ENCODE measurements at regions of chr2 and their contacts with region 1.

Region 1: GRCh38 chr2:38508311-38509039 is 94.3 kb downstream of the HNRNPLL start:
- DNase-seq: peak; percentile 89 to 94
- ATAC-seq: peak; percentile 93

Region 2: GRCh38 chr2:38030635-38031355 is 477.7 kb before region 1 on chr2:
- intact Hi-C with region 1: no loop called
- DNase-seq: no peak
- ATAC-seq: no peak

Region 3: DNA sequence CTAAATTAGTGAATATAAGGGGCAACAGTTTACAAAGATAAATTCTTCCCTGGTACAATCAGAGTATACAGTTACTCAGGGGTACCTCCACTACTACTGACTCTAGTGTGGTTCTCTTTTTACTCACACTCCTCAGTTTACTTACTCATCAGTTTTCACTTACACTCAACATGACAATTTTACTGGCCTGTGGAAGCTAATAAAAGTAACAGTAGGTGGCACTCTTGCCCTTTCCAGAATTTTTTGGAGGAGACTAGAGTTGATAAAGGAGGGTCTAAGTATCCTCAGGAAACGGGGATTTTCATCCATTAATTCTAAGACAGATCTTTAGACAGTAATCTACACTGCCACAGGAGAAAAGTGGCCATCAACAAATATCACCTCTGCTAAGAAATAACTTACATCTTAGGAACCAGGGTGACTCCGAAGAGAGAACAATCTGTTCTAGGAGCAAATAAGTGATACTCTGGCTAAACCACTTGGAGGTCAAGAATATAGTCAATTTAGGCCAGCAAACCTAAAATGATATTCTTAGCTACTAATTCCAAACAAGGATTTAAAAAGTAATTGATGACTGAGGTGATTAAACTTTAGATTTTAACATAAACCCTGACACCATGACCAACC is 192.7 kb before region 1 on chr2:
- intact Hi-C with region 1: loop called (anchors 5 kb)
- DNase-seq: no peak
- ATAC-seq: peak; percentile 64

Region 4: DNA sequence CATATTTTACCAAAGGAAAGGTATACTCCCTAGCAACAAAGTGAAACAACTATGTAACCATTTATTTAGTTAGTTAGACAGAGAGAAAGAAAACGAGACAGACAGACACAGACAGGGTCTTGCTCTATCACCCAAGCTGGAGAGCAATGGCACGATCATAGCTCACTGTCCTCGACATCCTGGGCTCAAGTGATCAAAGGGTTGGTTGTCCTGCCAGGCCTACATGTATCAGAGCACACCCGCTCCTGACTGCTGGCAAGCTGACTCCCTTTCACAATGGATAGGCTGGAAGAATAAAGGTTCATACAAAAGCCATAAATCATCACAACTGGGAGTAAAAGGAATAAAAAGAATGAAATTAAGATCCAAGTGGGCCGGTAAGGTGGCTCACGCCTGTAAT is 184.9 kb before region 1 on chr2:
- intact Hi-C with region 1: loop called (anchors 5 kb)
- DNase-seq: no peak
- ATAC-seq: no peak

Region 5: GRCh38 chr2:38600242-38600891 is 91.9 kb after region 1 on chr2:
- intact Hi-C with region 1: no loop called
- DNase-seq: peak in 1 of 2 donors; percentile 29
- ATAC-seq: no peak

Region 6: GRCh38 chr2:38830526-38831159 is 322.2 kb after region 1 on chr2:
- intact Hi-C with region 1: no loop called
- DNase-seq: no peak
- ATAC-seq: no peak